PC-9 (cell line): ENCODE measurements at regions of chr19 and their contacts with region 1.

Region 1: DNA sequence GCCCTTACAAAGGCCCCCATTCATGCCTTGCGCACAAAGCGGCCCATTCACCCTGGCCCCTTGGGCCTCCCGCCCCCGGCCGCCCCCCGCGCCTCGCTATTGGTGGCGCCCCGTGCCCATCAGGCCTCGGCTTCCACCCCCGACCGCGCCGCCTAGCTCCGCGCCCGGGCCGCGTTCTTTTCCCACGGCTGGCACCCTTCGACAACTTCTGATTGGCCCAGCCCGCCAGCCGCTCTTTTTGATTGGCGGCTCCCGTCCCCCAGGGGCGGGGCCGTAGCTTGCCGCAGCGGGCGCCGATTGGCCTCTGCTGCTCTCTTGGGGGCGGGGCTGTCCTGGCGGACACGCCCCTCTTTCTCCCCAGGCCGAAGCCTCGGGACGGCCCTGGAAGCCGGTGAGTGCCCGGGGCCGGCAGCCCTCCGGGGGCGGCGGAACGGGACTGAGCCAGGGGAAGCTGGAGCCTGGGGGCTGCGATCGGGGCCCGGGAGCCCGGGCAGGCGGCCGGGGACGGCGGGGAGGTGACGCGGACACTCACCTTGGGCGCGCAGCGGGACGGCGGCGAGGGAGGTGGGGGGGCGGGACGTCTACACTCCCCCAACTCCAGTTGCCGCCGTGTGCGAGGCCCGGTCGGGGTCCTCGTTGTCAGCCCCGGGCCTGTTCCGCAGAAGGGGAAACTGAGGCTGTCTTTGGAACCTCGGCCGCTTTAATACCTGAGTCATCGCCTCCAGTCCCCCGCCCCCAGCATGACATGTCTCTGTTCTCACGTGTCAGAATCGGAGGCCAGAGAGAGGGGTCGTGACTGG is at the start of gene MYH14:
- DNase-seq: peak; percentile 92 to 98
- H3K4me3 ChIP-seq: peak within 1 kb of the TSS; percentile 82
- H3K27ac ChIP-seq: peak within 1 kb of the TSS; percentile 97
- H3K4me1 ChIP-seq: peaks cover 33% of the 10 kb centered on the region
- H3K27me3 ChIP-seq: no peaks in the 10 kb centered on the region
- CTCF ChIP-seq: no peak
- total RNA-seq, gene MYH14: 115 and 169 TPM in 2 replicates

Region 2: DNA sequence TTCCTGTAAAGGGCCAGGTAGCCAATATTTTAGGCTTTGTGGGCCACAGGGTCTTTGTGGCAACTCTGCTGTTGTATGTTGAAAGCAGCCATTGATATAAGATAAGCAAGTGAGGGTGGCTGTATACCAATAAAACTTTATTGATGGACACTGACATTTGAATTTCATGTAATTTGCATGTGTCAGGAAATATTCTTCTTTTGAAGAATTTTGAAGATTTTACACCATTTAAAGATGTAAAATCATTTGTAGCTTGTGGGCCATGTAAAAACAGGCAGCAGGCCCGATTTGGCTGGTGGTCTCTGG is 907.1 kb after region 1 on chr19:
- CTCF ChIA-PET with region 1: no interaction called
- POLR2A ChIA-PET with region 1: interaction called, 14 read pairs
- intact Hi-C with region 1: no loop called
- DNase-seq: no peak
- H3K4me3 ChIP-seq: no peak overlapping the region
- H3K27ac ChIP-seq: no peak overlapping the region
- H3K4me1 ChIP-seq: peaks cover 10% of the 10 kb centered on the region
- H3K27me3 ChIP-seq: peaks cover 50% of the 10 kb centered on the region
- CTCF ChIP-seq: no peak